ENCODE measurements at regions of chr5 and their contacts with region 1.

Region 1: DNA sequence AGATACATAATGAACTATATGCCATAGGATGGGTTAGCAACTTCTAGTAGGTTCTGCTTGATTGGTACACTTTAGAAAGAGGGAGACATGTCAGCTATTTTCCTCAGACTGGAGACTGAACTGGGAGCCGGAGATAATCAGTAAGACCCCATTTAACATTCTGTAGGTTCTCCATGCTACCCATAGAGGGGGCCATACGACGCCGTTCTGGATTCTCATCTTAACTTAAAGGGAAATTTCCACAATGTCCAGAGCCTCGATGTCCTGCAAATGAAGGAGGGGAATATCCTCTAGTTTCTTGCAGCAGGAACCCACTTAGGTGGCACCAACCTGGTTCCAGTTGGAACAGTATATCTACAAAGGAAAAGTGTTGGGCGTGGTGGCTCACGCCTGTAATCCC is 22.3 kb upstream of the NPM1 start:
- DNase-seq: peak; percentile 34
- ATAC-seq: peak; percentile 92
- H3K4me3 Mint-ChIP-seq: no peak overlapping the region
- H3K27ac Mint-ChIP-seq: no peak overlapping the region
- H3K4me1 Mint-ChIP-seq: peaks cover 10% of the 10 kb centered on the region
- H3K27me3 Mint-ChIP-seq: no peaks in the 10 kb centered on the region; the same call in none of the 2 replicates
- CTCF ChIP-seq: peak; percentile 50; the same call in 1 of the 2 replicates

Region 2: GRCh38 chr5:171067540-171068130 is 297.7 kb before region 1 on chr5:
- CTCF ChIA-PET with region 1: no interaction called
- POLR2A ChIA-PET with region 1: no interaction called
- DNase-seq: no peak
- ATAC-seq: no peak
- H3K4me3 Mint-ChIP-seq: no peak overlapping the region
- H3K27ac Mint-ChIP-seq: no peak overlapping the region
- H3K4me1 Mint-ChIP-seq: no peaks in the 10 kb centered on the region
- H3K27me3 Mint-ChIP-seq: no peaks in the 10 kb centered on the region; the same call in 1 of the 2 replicates
- CTCF ChIP-seq: no peak

Region 3: DNA sequence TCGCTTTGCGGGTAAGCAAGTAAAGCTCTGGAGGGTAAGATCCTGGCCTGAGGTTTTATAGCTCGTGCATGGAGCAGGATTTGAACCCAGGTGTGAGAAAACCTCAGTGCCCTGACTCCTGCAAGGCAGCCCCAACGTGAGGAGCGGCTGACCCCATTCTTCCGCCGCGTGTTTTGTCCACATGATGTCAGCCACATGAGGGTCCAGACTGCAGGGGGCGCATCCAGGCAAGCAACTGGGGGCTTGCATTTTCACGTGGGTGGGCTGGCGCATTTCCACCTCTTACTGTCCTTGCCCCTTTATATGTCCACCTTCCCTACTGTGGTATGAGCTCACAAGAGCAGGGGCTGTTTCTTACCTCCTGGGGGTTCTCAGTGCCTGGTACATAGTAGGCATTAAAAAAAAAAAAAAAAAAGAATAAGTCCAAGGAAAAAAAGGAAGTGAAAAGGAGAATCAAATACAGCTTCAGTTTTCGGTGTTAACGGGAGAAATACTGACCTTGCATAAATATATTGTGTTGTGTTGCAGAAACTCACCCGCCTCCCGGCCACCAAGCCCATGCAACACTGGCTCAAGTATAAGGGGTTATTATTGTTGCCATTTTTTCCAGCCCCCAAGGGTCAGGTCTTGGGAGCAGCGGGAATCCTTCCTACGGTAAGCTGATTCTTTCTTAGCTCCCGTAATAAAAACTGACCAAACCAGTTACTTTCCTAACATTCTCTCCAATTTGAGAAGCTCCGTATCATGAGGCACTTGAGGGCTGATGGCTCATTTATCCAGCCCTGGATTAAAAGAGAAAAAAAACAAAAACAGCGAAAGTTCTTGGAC is 41.3 kb before region 1 on chr5:
- CTCF ChIA-PET with region 1: interaction called, 12 read pairs
- POLR2A ChIA-PET with region 1: no interaction called
- DNase-seq: no peak
- ATAC-seq: peak; percentile 32; the same call in 1 of the 2 replicates
- H3K4me3 Mint-ChIP-seq: no peak overlapping the region
- H3K27ac Mint-ChIP-seq: no peak overlapping the region
- H3K4me1 Mint-ChIP-seq: peaks cover 33% of the 10 kb centered on the region
- H3K27me3 Mint-ChIP-seq: peaks cover 89% of the 10 kb centered on the region
- CTCF ChIP-seq: no peak

Region 4: DNA sequence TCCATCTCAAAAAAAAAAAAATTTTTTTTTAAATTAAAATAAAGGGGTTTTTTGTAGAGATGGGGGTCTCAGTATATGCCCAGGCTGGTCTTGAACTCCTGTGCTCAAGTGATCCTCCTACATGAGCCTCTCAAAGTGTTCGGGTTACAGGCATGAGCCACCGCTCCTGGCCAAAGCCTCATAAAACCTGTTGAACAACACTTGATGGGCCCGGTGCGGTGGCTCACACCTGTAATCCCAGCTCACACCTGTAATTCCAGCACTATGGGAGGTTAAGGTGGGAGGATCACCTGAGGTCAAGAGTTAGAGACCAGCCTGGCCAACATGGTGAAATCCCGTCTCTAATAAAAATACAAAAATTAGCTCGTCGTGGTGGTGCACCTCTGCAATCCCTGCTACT is 14.6 kb after region 1 on chr5:
- CTCF ChIA-PET with region 1: interaction called, 10 read pairs
- POLR2A ChIA-PET with region 1: no interaction called
- DNase-seq: no peak
- ATAC-seq: no peak
- H3K4me3 Mint-ChIP-seq: no peak overlapping the region
- H3K27ac Mint-ChIP-seq: no peak overlapping the region
- H3K4me1 Mint-ChIP-seq: no peaks in the 10 kb centered on the region
- H3K27me3 Mint-ChIP-seq: no peaks in the 10 kb centered on the region; the same call in 1 of the 2 replicates
- CTCF ChIP-seq: no peak

Region 5: DNA sequence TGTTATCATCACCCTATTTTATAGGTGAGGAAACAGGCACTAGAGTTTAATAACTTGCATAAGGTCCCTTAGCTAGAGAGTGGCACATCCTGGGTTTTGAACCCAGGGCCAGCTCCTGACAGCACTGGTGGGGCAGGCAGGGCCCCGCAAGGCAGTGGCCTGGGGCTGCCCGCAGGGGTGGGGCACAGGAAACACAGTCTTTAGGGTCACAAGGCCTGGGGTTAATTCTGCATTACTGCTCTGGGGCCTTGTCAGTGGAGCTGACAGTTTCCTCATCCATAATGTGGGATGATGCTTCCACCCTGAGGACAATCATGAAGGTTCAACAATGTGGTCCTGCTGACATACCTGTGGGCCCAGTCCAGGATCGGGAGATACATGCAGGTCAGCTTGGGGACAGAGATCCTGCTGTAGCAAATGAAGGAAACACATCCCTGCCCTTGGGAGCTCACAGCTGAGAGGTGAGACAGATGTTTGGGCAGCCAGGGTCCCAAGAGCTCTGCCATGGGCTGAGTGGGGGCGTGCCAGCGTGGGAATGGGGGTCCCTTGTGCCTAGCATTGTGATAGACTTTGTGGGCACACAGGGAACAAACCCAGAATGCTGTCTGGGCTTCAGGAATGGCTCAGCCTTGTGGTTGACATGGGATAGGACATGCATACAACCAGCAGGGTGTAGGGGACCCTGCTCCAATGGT is 68.8 kb after region 1 on chr5:
- CTCF ChIA-PET with region 1: no interaction called
- POLR2A ChIA-PET with region 1: no interaction called
- DNase-seq: no peak
- ATAC-seq: no peak
- H3K4me3 Mint-ChIP-seq: no peak overlapping the region
- H3K27ac Mint-ChIP-seq: no peak overlapping the region
- H3K4me1 Mint-ChIP-seq: peaks cover 28% of the 10 kb centered on the region
- H3K27me3 Mint-ChIP-seq: no peaks in the 10 kb centered on the region
- CTCF ChIP-seq: no peak

Measured in WTC11 (cell line).